ENCODE measurements at regions of chr1 and their contacts with region 1.

Region 1: DNA sequence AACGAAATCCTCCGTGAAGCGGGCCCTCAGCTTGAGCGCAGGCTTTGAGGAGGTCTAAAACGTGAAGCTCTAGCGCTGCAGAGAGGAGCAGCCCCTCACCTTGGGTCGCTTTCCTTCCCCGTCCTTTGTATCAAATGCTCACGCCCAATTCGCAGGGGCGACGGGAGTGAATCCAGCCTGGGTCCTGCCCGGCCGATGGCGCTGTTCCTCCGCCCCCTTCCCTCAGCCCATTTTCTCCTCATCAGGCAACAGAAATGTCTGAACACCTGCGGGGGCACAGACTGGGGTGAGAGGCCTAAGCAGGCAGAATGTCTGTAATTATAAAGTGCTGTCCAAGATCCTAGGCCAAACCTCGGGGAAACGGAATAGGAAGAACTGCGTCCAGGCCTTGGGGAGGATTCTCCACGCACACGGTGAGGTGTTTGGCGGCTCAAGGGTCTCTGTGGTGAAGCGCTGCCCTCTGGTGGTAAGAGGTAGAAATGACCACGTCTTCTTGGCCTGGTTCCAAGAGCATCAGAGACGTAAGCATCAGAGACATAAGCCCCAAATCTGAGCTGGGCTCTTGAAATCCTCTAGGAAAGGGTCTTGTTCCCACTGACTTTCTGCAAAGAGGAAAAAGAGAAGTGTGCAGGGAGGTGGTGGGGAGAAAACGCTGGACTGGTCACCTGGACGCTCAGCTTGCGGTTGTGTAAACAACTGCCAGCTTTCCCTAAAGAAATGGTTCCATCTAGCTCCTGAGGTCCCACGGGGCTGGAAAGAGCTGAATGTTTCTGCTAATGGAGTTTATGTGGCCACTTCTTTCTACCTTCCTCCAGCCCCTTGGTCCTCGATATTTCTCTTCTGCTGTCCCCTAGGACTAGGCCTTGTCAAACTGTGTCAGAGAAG is 92.1 kb upstream of the CD53 start:
- DNase-seq: peak; percentile 74 to 81 (median 76)
- H3K4me3 ChIP-seq: no peak overlapping the region
- H3K4me3 Mint-ChIP-seq: peak overlapping the region in 5 of 8 donors; percentile 3 to 47 (median 28)
- H3K27ac ChIP-seq: no peak overlapping the region
- H3K27ac Mint-ChIP-seq: peak overlapping the region in 3 of 7 donors; percentile 31 to 74 (median 67)
- H3K4me1 ChIP-seq: peaks cover 37% of the 10 kb centered on the region
- H3K4me1 Mint-ChIP-seq: peaks cover 33 to 51% (median 39%) of the 10 kb centered on the region in 4 donors
- H3K27me3 ChIP-seq: no peaks in the 10 kb centered on the region
- H3K27me3 Mint-ChIP-seq: peaks cover 0 to 1% of the 10 kb centered on the region in 2 donors

Region 2: DNA sequence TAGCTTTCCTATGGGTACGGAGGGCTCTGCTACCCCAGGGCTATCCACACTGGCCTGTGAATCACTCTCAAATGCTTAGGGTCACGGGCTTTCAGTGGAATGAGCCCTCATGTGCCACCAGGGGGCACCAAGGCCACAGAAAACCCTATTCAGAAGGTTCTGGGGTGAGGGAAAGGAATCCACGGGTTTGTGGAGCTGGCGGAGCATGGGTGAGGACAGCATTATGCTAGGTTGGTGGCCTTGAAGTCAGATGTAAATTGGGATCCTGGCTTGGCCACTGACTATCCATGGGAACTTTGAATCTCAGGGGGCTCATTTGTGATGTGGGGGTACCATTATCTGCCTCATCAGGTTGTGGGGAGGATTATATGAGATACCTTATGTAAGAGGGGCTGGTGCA is 368.3 kb before region 1 on chr1:
- CTCF ChIA-PET with region 1: interaction called, 3 read pairs
- POLR2A ChIA-PET with region 1: no interaction called
- intact Hi-C with region 1: loop called (anchors 2 kb)
- DNase-seq: peak; percentile 52 to 63 (median 56)
- H3K4me3 ChIP-seq: no peak overlapping the region
- H3K4me3 Mint-ChIP-seq: no peak overlapping the region
- H3K27ac ChIP-seq: no peak overlapping the region
- H3K27ac Mint-ChIP-seq: peak overlapping the region in 4 of 7 donors; percentile 5 to 84 (median 49)
- H3K4me1 ChIP-seq: peaks cover 15% of the 10 kb centered on the region
- H3K4me1 Mint-ChIP-seq: peaks cover 10 to 19% (median 13%) of the 10 kb centered on the region in 4 donors
- H3K27me3 ChIP-seq: no peaks in the 10 kb centered on the region
- H3K27me3 Mint-ChIP-seq: no peaks in the 10 kb centered on the region

Region 3: DNA sequence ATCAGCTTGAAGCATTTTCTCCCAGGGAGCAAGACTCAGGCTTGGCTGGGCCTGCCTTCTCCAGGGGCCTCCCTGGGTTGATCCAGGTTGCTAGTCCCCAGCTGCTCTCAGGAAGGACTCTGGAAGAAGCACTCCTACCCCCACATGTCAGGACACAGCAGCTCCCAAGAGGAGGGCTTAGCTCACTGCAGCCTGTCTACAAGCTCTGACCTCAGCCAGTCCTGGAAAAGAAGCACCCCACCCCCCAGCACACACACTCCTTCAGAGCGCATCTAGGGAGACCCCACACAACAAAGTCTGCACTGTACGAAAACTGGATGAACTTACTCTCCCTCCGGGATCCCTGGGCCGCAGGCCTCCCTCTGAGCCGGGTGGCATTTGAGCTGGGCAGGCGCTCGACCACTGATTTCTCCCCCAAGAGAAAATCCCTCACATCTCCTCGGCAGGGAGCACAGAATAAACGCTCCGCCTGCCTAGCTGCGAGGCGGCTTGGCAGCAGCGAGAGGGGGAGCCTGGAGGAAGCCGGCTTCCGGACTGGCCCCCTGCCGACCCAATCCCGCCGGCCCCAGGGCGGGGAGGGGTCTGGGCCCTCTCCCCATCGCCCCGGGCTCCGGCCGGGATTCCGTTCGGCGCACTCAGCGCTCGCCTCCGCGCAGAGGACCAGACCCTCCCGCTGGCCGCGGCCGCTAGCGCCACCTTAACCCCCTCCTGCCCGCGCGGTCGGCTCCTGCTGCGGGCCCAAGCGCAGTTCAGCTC is 174.8 kb before region 1 on chr1 and contains the start of gene KCNA2:
- CTCF ChIA-PET with region 1: interaction called, 16 read pairs
- POLR2A ChIA-PET with region 1: no interaction called
- intact Hi-C with region 1: no loop called
- DNase-seq: peak in 1 of 5 donors; percentile 15
- H3K4me3 ChIP-seq: peak within 1 kb of the TSS; percentile 54 to 59
- H3K4me3 Mint-ChIP-seq: peak within 1 kb of the TSS; percentile 81 to 90 (median 84)
- H3K27ac ChIP-seq: no peak within 1 kb of the TSS
- H3K27ac Mint-ChIP-seq: peak within 1 kb of the TSS in 1 of 7 donors; percentile 47
- H3K4me1 ChIP-seq: peaks cover 21% of the 10 kb centered on the region
- H3K4me1 Mint-ChIP-seq: peaks cover 6 to 30% (median 16%) of the 10 kb centered on the region in 4 donors
- H3K27me3 ChIP-seq: peaks cover 31% of the 10 kb centered on the region
- H3K27me3 Mint-ChIP-seq: peaks cover 25 to 47% of the 10 kb centered on the region in 2 donors
- total RNA-seq, gene KCNA2: 1.2 to 2.2 TPM

Region 4: DNA sequence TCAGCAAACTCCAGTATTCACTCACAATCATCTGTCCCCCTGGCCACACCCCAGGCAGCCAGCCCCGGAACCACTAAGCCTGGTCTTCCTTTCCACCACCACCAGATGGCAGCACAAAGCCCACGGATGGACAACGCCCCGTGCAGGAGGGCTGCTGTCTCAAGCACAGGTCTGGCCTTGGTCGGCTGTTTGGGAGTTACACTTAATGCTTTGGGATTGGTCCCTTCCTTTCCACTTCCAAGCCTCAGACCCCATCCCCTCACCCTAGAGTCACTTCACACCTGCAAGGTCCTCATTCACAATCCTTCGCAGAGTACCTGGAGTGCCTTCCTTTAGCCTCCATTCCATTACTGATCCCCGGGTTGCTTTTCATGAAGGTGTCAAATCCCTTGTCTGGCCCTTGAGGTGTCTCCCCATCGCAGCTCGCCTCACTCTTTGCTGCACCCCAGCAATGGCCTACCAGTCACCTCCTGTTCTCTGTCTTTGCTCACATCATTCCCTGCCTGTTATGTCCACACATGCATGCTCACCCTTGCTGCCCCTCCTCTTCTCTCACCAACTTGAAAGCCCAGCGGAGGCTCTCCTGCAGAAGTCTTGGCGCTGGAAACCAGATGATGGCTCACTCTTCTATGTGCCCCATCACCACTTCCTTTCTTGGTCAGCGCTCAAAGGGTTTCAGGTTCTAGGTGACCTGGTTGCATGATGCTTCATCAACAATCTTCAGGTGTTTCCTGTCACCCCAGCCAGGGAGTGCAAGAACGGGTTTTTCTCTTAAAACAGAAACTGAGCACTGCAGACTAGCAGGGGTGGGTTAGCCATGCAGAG is 149.8 kb before region 1 on chr1:
- CTCF ChIA-PET with region 1: interaction called, 19 read pairs
- POLR2A ChIA-PET with region 1: interaction called, 16 read pairs
- intact Hi-C with region 1: loop called (anchors 1 kb)
- DNase-seq: peak; percentile 87 to 92 (median 88)
- H3K4me3 ChIP-seq: peak overlapping the region; percentile 25 to 46
- H3K4me3 Mint-ChIP-seq: no peak overlapping the region
- H3K27ac ChIP-seq: peak overlapping the region; percentile 72
- H3K27ac Mint-ChIP-seq: no peak overlapping the region
- H3K4me1 ChIP-seq: peaks cover 95% of the 10 kb centered on the region
- H3K4me1 Mint-ChIP-seq: peaks cover 32 to 57% (median 54%) of the 10 kb centered on the region in 4 donors
- H3K27me3 ChIP-seq: no peaks in the 10 kb centered on the region
- H3K27me3 Mint-ChIP-seq: no peaks in the 10 kb centered on the region

Region 5: GRCh38 chr1:110696818-110697217 is 84.0 kb before region 1 on chr1:
- CTCF ChIA-PET with region 1: no interaction called
- POLR2A ChIA-PET with region 1: no interaction called
- intact Hi-C with region 1: no loop called
- DNase-seq: no peak
- H3K4me3 ChIP-seq: no peak overlapping the region
- H3K4me3 Mint-ChIP-seq: no peak overlapping the region
- H3K27ac ChIP-seq: no peak overlapping the region
- H3K27ac Mint-ChIP-seq: no peak overlapping the region
- H3K4me1 ChIP-seq: no peaks in the 10 kb centered on the region
- H3K4me1 Mint-ChIP-seq: peaks cover 0 to 2% (median 0%) of the 10 kb centered on the region in 4 donors
- H3K27me3 ChIP-seq: no peaks in the 10 kb centered on the region
- H3K27me3 Mint-ChIP-seq: peaks cover 0 to 8% of the 10 kb centered on the region in 2 donors

Region 6: GRCh38 chr1:110798691-110799256 is 17.9 kb after region 1 on chr1:
- CTCF ChIA-PET with region 1: interaction called, 11 read pairs
- POLR2A ChIA-PET with region 1: no interaction called
- intact Hi-C with region 1: no loop called
- DNase-seq: no peak
- H3K4me3 ChIP-seq: no peak overlapping the region
- H3K4me3 Mint-ChIP-seq: no peak overlapping the region
- H3K27ac ChIP-seq: no peak overlapping the region
- H3K27ac Mint-ChIP-seq: no peak overlapping the region
- H3K4me1 ChIP-seq: no peaks in the 10 kb centered on the region
- H3K4me1 Mint-ChIP-seq: peaks cover 0 to 2% (median under 1%) of the 10 kb centered on the region in 4 donors
- H3K27me3 ChIP-seq: no peaks in the 10 kb centered on the region
- H3K27me3 Mint-ChIP-seq: peaks cover 0 to 4% of the 10 kb centered on the region in 2 donors

Region 7: DNA sequence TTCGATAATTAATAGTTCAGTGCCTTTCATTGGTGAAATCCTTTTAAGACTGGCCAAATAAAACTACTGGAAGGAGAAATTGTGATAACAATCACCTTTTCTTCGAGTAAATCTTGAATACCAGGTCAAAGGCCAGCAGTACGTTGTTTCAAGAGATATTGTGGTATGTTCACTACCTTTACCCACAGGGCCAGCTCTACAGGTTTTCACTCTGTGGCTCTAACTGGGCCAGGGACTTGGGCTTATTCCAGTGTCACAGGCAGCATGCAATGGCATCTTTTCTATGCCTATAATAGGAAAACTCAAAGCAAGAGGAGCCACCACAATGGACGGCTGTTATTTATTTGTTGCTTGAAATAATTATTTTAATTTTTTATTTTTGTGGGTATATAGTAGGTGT is 209.7 kb after region 1 on chr1:
- CTCF ChIA-PET with region 1: interaction called, 40 read pairs
- POLR2A ChIA-PET with region 1: interaction called, 3 read pairs
- intact Hi-C with region 1: loop called (anchors 1 kb)
- DNase-seq: no peak
- H3K4me3 ChIP-seq: no peak overlapping the region
- H3K4me3 Mint-ChIP-seq: no peak overlapping the region
- H3K27ac ChIP-seq: no peak overlapping the region
- H3K27ac Mint-ChIP-seq: no peak overlapping the region
- H3K4me1 ChIP-seq: no peaks in the 10 kb centered on the region
- H3K4me1 Mint-ChIP-seq: peaks cover 0 to 4% (median 2%) of the 10 kb centered on the region in 4 donors
- H3K27me3 ChIP-seq: no peaks in the 10 kb centered on the region
- H3K27me3 Mint-ChIP-seq: peaks cover 5 to 9% of the 10 kb centered on the region in 2 donors